Activated CD4-positive, alpha-beta T cell treated with anti-CD3 and anti-CD28 coated beads for 36 hours (primary cell): ENCODE measurements at regions of chr16 and their contacts with region 1.

Region 1: GRCh38 chr16:31713071-31713944 is 160.3 kb upstream of the ZNF267 start:
- DNase-seq: peak; percentile 95
- ATAC-seq: peak; percentile 91
- H3K4me3 Mint-ChIP-seq: peak overlapping the region; percentile 96
- H3K27ac Mint-ChIP-seq: peak overlapping the region; percentile 99
- H3K4me1 Mint-ChIP-seq: peaks cover 47% of the 10 kb centered on the region
- H3K27me3 Mint-ChIP-seq: no peaks in the 10 kb centered on the region

Region 2: DNA sequence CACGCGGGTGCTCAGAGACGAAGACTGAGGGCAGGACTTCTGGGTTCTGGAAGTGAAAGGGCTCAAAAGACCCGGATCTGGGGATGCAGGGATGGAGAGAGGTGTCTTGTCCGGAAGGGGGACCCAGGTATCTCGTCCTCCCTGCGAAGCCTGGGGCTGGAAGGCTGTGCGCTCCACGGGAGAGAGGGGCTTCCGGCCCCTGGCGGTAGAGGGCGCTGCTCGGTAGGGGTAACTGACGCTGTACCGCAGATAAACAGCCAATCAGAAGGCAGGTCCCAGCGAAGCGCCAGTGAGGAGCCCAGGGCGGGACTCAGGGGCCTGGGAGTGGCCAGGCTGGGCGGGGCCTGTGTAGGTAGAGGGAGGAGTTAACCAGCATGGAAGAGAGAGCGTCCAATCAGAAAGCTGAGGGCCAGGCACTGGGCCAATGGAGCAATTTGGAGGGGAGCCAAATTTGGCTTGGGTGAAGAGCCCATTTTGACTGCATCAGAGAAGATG is 240.6 kb before region 1 on chr16:
- CTCF ChIA-PET with region 1: no interaction called
- POLR2A ChIA-PET with region 1: no interaction called
- intact Hi-C with region 1: loop called in 1 of 2 experiments (anchors 1 kb)
- DNase-seq: peak; percentile 74
- ATAC-seq: peak; percentile 54
- H3K4me3 Mint-ChIP-seq: peak overlapping the region; percentile 54
- H3K27ac Mint-ChIP-seq: no peak overlapping the region
- H3K4me1 Mint-ChIP-seq: peaks cover 22% of the 10 kb centered on the region
- H3K27me3 Mint-ChIP-seq: peaks cover 18% of the 10 kb centered on the region

Region 3: GRCh38 chr16:31507929-31508705 is 205.2 kb before region 1 on chr16 and contains the start of gene RUSF1:
- CTCF ChIA-PET with region 1: interaction called, 4 read pairs
- POLR2A ChIA-PET with region 1: interaction called, 3 read pairs
- intact Hi-C with region 1: loop called in 1 of 2 experiments (anchors 1 kb)
- DNase-seq: peak; percentile 94
- ATAC-seq: peak; percentile 77
- H3K4me3 Mint-ChIP-seq: peak within 1 kb of the TSS; percentile 88
- H3K27ac Mint-ChIP-seq: peak within 1 kb of the TSS; percentile 98
- H3K4me1 Mint-ChIP-seq: peaks cover 47% of the 10 kb centered on the region
- H3K27me3 Mint-ChIP-seq: no peaks in the 10 kb centered on the region
- total RNA-seq, gene RUSF1: 36.3 to 37.7 TPM

Region 4: GRCh38 chr16:31764103-31764502 is 50.8 kb after region 1 on chr16:
- CTCF ChIA-PET with region 1: no interaction called
- POLR2A ChIA-PET with region 1: no interaction called
- intact Hi-C with region 1: loop called in 1 of 2 experiments (anchors 10 kb)
- DNase-seq: no peak
- ATAC-seq: no peak
- H3K4me3 Mint-ChIP-seq: no peak overlapping the region
- H3K27ac Mint-ChIP-seq: no peak overlapping the region
- H3K4me1 Mint-ChIP-seq: no peaks in the 10 kb centered on the region
- H3K27me3 Mint-ChIP-seq: no peaks in the 10 kb centered on the region

Region 5: GRCh38 chr16:31873556-31874365 is 160.5 kb after region 1 on chr16 and contains the start of gene ZNF267:
- CTCF ChIA-PET with region 1: interaction called, 14 read pairs
- POLR2A ChIA-PET with region 1: interaction called, 14 read pairs
- intact Hi-C with region 1: loop called in 1 of 2 experiments (anchors 2 kb)
- DNase-seq: peak; percentile 96
- ATAC-seq: peak; percentile 60
- H3K4me3 Mint-ChIP-seq: peak within 1 kb of the TSS; percentile 94
- H3K27ac Mint-ChIP-seq: peak within 1 kb of the TSS; percentile 97
- H3K4me1 Mint-ChIP-seq: peaks cover 73% of the 10 kb centered on the region
- H3K27me3 Mint-ChIP-seq: no peaks in the 10 kb centered on the region
- total RNA-seq, gene ZNF267: 61.9 to 64.9 TPM